ENCODE measurements at regions of chr22 and their contacts with region 1.

Region 1: GRCh38 chr22:19178656-19179496 is at the start of gene SLC25A1:
- H3K4me3 ChIP-seq: peak within 1 kb of the TSS; percentile 82
- H3K27ac ChIP-seq: peak within 1 kb of the TSS; percentile 84
- H3K4me1 ChIP-seq: no peaks in the 10 kb centered on the region; the same call in 1 of the 2 replicates
- CTCF ChIP-seq: no peak

Region 2: DNA sequence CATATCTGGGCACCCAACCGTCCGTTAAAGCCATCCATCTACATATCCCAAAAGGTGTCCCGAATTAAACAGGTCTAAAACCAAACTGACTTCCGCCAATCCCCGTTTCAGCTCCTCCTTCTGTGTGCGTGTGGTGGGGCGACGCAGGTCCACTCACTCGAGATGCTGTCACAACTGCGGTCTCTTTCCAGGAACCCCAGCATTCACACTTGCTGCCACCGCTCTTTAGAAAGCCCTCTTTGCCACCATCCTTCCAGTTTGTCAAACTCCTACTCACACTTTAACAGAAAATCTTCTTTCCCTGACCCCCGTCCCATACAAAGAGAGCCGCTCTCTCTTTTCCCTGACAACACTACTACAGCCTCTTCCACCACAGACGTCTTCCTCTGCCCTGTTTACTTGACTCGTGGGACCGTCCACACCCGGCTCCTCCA is 34.9 kb before region 1 on chr22:
- CTCF ChIA-PET with region 1: interaction called, 18 read pairs
- POLR2A ChIA-PET with region 1: interaction called, 26 read pairs
- H3K4me3 ChIP-seq: peak overlapping the region; percentile 86
- H3K27ac ChIP-seq: peak overlapping the region; percentile 43; the same call in 1 of the 2 replicates
- H3K4me1 ChIP-seq: no peaks in the 10 kb centered on the region
- CTCF ChIP-seq: no peak

Region 3: DNA sequence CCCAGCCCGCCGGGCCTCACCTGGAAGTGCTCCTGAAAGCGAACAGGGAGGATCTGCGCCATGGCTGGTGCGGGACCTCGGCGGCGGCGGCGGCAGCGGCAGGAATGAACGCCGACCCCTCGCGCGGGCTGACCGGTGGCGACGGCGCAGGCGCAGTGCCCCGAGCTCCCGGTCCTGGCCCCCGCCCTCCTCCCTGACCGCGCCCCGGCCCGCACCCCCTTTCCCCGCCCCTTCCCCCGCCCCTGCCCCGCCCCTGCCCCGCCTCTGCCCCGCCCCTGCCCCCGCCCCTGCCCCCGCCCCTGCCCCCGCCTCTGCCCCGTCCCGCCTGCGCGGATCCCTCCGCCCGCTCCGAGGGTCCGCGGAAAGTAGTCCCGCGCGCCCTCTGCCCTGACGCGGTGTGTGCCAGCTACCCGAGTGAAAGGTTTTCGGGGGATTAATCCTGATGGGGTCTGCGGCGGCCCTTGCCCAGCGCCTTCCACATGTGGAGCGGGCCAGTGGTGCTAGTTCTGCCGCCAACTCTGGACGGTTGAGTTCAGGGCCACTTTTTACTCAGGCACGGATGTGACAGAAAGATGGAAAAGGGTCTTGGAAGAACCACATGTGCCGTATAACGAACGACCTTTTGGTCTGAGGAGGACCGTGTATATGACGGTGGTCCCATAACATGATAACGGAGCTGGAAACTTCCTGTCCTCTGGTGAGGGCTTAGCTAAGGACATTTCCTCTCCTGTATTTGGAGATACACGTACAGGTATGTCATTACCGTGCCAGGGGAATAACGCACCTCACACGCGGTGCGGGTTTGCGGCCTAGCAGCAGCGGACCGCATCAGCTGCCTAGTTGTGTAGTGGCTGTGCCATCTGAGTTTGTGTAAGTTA is 112.9 kb after region 1 on chr22 and contains the start of gene CLTCL1:
- CTCF ChIA-PET with region 1: interaction called, 9 read pairs
- POLR2A ChIA-PET with region 1: interaction called, 15 read pairs
- H3K4me3 ChIP-seq: peak within 1 kb of the TSS; percentile 83
- H3K27ac ChIP-seq: peak within 1 kb of the TSS; percentile 56; the same call in 1 of the 2 replicates
- H3K4me1 ChIP-seq: peaks cover 3% of the 10 kb centered on the region; the same call in 1 of the 2 replicates
- CTCF ChIP-seq: no peak

Region 4: DNA sequence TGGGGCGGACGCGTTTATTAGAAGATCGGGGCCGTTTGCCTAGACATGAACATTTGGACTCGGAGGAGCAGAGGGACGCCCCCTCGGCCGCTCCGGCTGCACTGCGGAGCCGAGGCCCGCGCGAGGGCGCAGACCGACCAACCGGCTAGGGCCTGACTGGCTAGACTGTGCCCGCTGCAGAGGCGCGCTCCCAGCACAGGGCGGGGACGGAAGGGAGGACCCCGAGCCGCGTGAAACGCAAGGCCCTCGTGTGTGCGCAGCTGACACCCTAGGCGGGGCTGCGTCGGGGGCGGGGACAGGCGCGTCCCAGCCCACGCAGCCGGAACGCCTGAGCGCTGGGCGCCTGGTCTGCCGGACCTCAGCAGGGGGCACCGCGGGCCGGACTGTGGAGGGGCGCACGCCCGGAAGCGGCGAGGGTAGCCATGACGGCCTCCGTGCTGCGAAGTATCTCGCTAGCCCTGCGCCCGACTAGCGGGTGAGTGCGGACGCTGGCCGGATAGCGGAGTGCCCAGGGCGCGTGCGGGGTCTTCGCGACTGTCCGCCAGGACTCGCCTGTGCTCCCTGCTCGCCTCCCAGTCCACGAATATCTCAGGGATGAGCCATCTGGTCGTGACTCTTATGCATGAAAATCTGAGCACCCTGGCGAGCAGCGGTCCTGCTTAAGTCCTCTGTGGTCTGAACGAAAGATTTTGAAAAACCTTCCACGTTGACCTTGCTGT is 253.4 kb after region 1 on chr22 and contains the start of gene MRPL40:
- CTCF ChIA-PET with region 1: interaction called, 6 read pairs
- POLR2A ChIA-PET with region 1: interaction called, 22 read pairs
- H3K4me3 ChIP-seq: peak within 1 kb of the TSS; percentile 90
- H3K27ac ChIP-seq: peak within 1 kb of the TSS; percentile 67
- H3K4me1 ChIP-seq: no peaks in the 10 kb centered on the region; the same call in 1 of the 2 replicates
- CTCF ChIP-seq: no peak; the same call in 1 of the 2 replicates

Region 5: GRCh38 chr22:19479357-19480172 is 300.7 kb after region 1 on chr22 and contains the start of gene CDC45:
- CTCF ChIA-PET with region 1: interaction called, 3 read pairs
- POLR2A ChIA-PET with region 1: interaction called, 20 read pairs
- H3K4me3 ChIP-seq: peak within 1 kb of the TSS; percentile 92
- H3K27ac ChIP-seq: peak within 1 kb of the TSS; percentile 86
- H3K4me1 ChIP-seq: no peaks in the 10 kb centered on the region
- CTCF ChIP-seq: no peak